ENCODE measurements at regions of chr17 and their contacts with region 1.

Region 1: GRCh38 chr17:59892924-59893676 is at the starts of genes RPS6KB1 and TUBD1:
- DNase-seq: peak; percentile 88 to 99 (median 98)
- ATAC-seq: peak; percentile 92 to 93
- H3K4me3 Mint-ChIP-seq: peak within 1 kb of the TSS; percentile 97 to 100 (median 100)
- H3K27ac Mint-ChIP-seq: peak within 1 kb of the TSS; percentile 98 to 100 (median 99)
- H3K4me1 Mint-ChIP-seq: peaks cover 24 to 69% (median 62%) of the 10 kb centered on the region in 4 donors
- H3K27me3 Mint-ChIP-seq: no peaks in the 10 kb centered on the region
- polyA plus RNA-seq, gene RPS6KB1: 22.7 to 31.5 (median 23.5) TPM
- polyA plus RNA-seq, gene TUBD1: 16.9 to 24.0 (median 17.0) TPM

Region 2: DNA sequence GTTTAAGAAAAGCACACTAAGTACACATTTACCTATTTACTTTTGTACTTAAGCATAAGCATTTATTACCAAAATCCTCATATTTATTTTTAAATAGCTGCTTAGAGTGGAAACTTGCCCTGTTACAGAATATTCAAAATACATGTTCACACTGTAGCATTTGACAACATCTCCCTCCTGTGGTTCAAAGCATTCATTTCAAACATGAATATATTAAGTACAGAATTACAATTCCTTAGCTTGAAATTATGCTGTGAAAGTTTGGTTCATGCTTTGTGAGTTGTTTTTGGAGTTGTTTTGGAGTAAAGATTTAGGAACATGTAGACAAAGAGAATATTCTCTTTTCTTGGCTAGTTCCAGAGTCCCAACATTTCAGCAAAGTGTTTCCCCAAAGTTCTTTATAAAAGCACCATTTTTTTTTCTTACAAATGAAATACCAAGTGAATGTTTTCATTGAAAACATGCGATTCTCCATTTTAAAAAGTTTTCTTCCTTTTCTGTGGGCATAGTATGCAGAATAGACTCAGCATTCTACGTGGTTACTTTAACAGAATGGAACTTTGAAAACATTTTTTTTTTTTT is 33.6 kb before region 1 on chr17:
- POLR2A ChIA-PET with region 1: no interaction called
- DNase-seq: peak in 1 of 10 donors; percentile 21
- ATAC-seq: peak in 1 of 2 donors; percentile 33
- H3K4me3 Mint-ChIP-seq: no peak overlapping the region
- H3K27ac Mint-ChIP-seq: peak overlapping the region in 4 of 10 donors; percentile 33 to 96 (median 44)
- H3K4me1 Mint-ChIP-seq: peaks cover 0 to 7% (median under 1%) of the 10 kb centered on the region in 4 donors
- H3K27me3 Mint-ChIP-seq: no peaks in the 10 kb centered on the region

Region 3: GRCh38 chr17:59964482-59965328 is 71.6 kb after region 1 on chr17 and contains the start of gene RNFT1:
- POLR2A ChIA-PET with region 1: interaction called, 19 read pairs
- DNase-seq: peak; percentile 81 to 95 (median 88)
- ATAC-seq: peak; percentile 85 to 87
- H3K4me3 Mint-ChIP-seq: peak within 1 kb of the TSS; percentile 82 to 97 (median 95)
- H3K27ac Mint-ChIP-seq: peak within 1 kb of the TSS; percentile 95 to 99 (median 98)
- H3K4me1 Mint-ChIP-seq: peaks cover 6 to 32% (median 22%) of the 10 kb centered on the region in 4 donors
- H3K27me3 Mint-ChIP-seq: no peaks in the 10 kb centered on the region
- polyA plus RNA-seq, gene RNFT1: 24.2 to 30.6 (median 26.4) TPM

Measured in naive thymus-derived CD8-positive, alpha-beta T cell (primary cell).